HAP-1 (cell line): ENCODE measurements at regions of chr16 and their contacts with region 1.

Region 1: GRCh38 chr16:88939972-88940861 is 36.8 kb downstream of the CBFA2T3 start:
- DNase-seq: no peak
- H3K4me3 ChIP-seq: no peak overlapping the region
- H3K4me1 ChIP-seq: no peaks in the 10 kb centered on the region
- H3K27me3 ChIP-seq: peaks cover 68% of the 10 kb centered on the region

Region 2: DNA sequence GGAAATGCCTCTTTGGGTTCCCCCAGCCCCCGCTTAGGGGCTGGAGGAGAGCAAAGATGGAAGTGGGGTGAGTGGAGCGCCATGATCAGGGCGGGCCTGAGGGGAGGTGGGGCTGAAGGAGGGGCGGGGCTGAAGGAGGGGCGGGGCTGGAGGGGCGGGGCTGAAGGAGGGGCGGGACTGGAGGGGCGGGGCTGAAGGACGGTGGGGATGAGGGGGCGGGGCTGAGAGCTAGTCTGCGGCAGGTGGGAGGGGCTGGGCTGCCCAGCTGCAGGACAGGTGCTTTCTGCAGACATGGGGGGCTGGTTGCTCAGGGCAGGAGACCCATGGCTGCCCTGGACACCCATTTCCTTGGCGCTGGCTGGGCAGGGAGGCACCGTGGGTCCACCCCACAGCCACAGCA is 34.7 kb before region 1 on chr16:
- in situ Hi-C with region 1: no loop called
- DNase-seq: peak; percentile 10 to 67
- H3K4me3 ChIP-seq: no peak overlapping the region
- H3K4me1 ChIP-seq: no peaks in the 10 kb centered on the region
- H3K27me3 ChIP-seq: no peaks in the 10 kb centered on the region

Region 3: GRCh38 chr16:89167425-89167941 is 227.3 kb after region 1 on chr16:
- in situ Hi-C with region 1: loop called (anchors 10 kb)
- DNase-seq: peak; percentile 70 to 97
- H3K4me3 ChIP-seq: no peak overlapping the region
- H3K4me1 ChIP-seq: peaks cover 6% of the 10 kb centered on the region
- H3K27me3 ChIP-seq: no peaks in the 10 kb centered on the region